ENCODE measurements at regions of chr3 and their contacts with region 1.

Region 1: DNA sequence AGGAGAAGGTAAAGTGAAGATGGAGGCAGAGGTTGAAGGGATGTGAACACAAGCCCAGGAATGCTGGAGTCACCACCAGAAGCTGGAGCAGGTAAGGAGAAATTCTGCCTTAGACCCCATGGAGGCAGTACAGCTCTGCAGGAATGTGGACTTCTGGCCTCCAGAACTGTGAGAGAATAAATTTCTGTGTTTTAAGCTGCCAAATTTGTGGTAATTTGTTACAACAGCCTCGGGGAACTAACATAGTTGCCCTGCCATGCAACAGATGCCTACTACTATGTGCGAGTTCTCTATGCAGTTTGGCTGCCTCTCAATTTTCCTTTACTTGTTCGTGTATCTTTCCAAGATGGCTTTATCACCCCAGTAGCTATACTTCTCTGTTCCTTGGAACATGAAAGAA is 394.1 kb downstream of the TUSC7 start:
- DNase-seq: no peak
- ATAC-seq: no peak
- H3K4me3 Mint-ChIP-seq: no peak overlapping the region
- H3K27ac Mint-ChIP-seq: no peak overlapping the region
- H3K4me1 Mint-ChIP-seq: peaks cover 20% of the 10 kb centered on the region
- H3K27me3 Mint-ChIP-seq: no peaks in the 10 kb centered on the region
- CTCF ChIP-seq: no peak

Region 2: GRCh38 chr3:116863822-116864589 is 239.7 kb before region 1 on chr3:
- CTCF ChIA-PET with region 1: interaction called, 11 read pairs
- POLR2A ChIA-PET with region 1: no interaction called
- DNase-seq: peak; percentile 22
- ATAC-seq: peak; percentile 89
- H3K4me3 Mint-ChIP-seq: no peak overlapping the region
- H3K27ac Mint-ChIP-seq: no peak overlapping the region
- H3K4me1 Mint-ChIP-seq: peaks cover 3% of the 10 kb centered on the region; the same call in 1 of the 2 replicates
- H3K27me3 Mint-ChIP-seq: no peaks in the 10 kb centered on the region
- CTCF ChIP-seq: no peak

Region 3: GRCh38 chr3:117045143-117045868 is 58.4 kb before region 1 on chr3:
- CTCF ChIA-PET with region 1: no interaction called
- POLR2A ChIA-PET with region 1: no interaction called
- DNase-seq: peak; percentile 67
- ATAC-seq: peak; percentile 99
- H3K4me3 Mint-ChIP-seq: no peak overlapping the region
- H3K27ac Mint-ChIP-seq: peak overlapping the region; percentile 60
- H3K4me1 Mint-ChIP-seq: peaks cover 29% of the 10 kb centered on the region
- H3K27me3 Mint-ChIP-seq: no peaks in the 10 kb centered on the region
- CTCF ChIP-seq: no peak

Region 4: GRCh38 chr3:117131259-117131658 is 27.6 kb after region 1 on chr3:
- CTCF ChIA-PET with region 1: no interaction called
- POLR2A ChIA-PET with region 1: no interaction called
- DNase-seq: peak; percentile 13
- ATAC-seq: no peak; the same call in 1 of the 2 replicates
- H3K4me3 Mint-ChIP-seq: no peak overlapping the region
- H3K27ac Mint-ChIP-seq: no peak overlapping the region
- H3K4me1 Mint-ChIP-seq: peaks cover 11% of the 10 kb centered on the region
- H3K27me3 Mint-ChIP-seq: no peaks in the 10 kb centered on the region
- CTCF ChIP-seq: no peak

Measured in WTC11 (cell line).